Cardiac septum (tissue), 1 donor: ENCODE measurements at regions of chrX and their contacts with region 1.

Region 1: DNA sequence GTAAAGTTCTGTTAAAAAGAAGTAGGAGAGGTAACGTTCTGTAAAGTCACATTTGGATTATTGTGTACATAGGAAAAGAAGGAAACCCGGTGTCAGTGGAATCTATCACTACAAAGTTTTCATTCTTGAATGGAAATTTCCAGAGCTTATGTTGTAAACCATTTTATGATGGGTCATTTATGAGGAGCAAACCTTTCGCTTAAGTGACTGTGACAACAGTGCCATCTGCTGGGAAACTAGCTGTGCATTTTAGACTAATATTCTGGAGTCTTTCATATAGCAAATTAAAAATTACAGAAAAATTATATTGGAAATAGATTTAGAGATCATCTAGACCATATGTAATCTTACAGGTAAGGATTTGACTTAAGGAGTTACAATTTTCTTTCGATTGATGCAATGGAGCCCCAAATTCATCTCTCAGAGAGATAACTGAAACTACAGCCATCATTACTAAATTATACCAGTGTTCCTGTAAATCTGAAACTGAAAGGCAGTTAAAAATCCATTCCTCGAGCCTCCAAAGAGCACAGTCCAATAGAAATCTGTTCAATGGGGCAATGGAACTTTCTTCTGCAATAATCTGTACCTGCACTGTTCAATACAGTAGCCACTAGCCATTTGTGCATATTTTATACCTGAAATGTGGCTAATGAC is 26.9 kb downstream of the ASB9 start:
- DNase-seq: no peak

Region 2: GRCh38 chrX:14043209-14043608 is 1199.8 kb before region 1 on chrX:
- intact Hi-C with region 1: loop called (anchors 5 kb)
- DNase-seq: no peak